ENCODE measurements at regions of chr1 and their contacts with region 1.

Region 1: DNA sequence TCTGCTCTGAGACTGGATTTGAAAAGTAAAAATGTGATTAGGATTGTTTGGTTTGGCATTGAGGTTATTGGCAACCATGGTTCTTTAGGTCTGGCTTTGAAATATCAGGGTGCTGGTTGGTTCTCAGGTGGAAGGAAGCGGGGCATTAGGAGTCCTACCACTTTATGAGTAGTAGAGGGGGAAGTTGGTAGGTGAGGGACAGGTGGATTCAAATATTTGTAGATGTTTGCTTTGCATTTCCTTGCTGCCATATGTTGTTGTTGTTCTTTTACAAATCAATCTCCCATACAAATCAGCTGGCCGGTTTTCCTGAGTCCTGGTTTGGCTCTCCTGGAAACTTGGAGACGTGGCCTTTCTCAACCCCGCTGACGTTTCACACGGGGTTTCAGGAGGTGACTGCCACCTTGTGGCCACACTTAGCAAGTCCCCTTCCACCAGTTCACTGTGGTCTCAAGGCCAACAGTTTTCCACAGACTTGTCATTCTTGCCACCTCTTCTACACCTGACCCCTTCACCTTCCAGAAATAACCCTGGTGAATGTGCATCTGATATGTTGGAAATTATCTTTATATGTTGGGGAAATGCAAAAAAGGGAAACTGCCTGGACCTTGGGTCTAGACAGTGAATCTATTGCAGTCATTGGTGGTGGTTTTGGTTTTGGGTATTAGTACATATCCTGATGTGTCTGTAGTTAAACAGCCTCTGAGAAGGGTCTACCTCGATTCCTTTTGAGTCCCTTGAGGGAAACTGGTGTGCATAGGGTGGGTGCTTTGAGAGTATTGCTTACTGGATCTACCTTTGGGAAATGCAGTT is 127.0 kb upstream of the KIAA0040 start:
- DNase-seq: peak; percentile 45 to 83 (median 71)
- ATAC-seq: peak; percentile 86
- H3K4me3 ChIP-seq: no peak overlapping the region
- H3K4me3 Mint-ChIP-seq: no peak overlapping the region
- H3K27ac ChIP-seq: no peak overlapping the region
- H3K27ac Mint-ChIP-seq: no peak overlapping the region
- H3K4me1 ChIP-seq: peaks cover 6% of the 10 kb centered on the region
- H3K4me1 Mint-ChIP-seq: peaks cover 11% of the 10 kb centered on the region
- H3K27me3 ChIP-seq: no peaks in the 10 kb centered on the region
- H3K27me3 Mint-ChIP-seq: peaks cover 3% of the 10 kb centered on the region
- CTCF ChIP-seq: peak; percentile 86

Region 2: DNA sequence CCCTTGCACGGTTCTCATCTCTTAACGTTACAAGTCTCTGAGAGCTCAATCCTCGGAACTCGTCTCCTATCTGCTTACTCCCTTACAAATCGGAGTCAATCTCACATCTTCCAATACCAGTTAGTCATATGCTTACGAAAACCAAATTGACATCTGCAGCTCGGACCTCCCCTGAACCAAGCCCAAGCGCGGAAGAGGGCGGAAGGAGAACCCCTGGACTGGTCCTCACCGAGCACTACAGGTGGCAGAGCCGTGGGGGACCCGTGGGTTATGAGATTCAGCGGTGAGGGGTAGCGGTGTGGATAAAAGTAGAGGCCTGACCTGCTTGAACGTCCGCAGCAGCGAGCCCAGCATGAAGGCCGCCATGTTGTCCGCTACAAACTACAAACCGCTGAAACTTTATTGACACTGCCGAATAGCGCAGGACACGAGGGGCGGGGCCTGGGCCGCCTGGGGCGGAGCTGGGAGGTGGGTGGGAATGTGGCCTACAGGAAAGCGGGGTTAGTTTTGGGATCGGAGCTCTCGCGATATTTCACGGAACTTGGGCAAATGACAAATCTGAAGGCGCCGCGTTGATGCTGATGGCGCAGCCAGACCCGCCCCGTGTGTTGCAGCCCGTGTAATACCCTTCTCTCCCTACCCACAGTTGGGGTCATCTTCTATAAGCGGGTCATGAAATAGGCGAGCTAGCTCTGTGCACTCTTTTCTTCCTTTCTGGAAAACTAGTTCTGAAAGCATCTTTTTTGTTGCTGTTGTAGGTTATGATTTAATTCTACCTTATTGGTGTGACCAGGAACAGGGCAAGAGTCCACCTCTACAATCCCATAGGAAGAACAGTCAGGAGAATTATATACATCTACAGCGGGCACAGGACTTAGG is 296.3 kb before region 1 on chr1 and contains the start of gene MRPS14:
- CTCF ChIA-PET with region 1: interaction called, 8 read pairs
- POLR2A ChIA-PET with region 1: no interaction called
- intact Hi-C with region 1: loop called in 1 of 2 experiments (anchors 2 kb)
- DNase-seq: peak; percentile 96 to 99 (median 98)
- ATAC-seq: peak; percentile 91
- H3K4me3 ChIP-seq: peak within 1 kb of the TSS; percentile 72 to 96
- H3K4me3 Mint-ChIP-seq: peak within 1 kb of the TSS; percentile 91
- H3K27ac ChIP-seq: peak within 1 kb of the TSS; percentile 83 to 93
- H3K27ac Mint-ChIP-seq: peak within 1 kb of the TSS; percentile 94
- H3K4me1 ChIP-seq: peaks cover 6% of the 10 kb centered on the region
- H3K4me1 Mint-ChIP-seq: peaks cover 32% of the 10 kb centered on the region
- H3K27me3 ChIP-seq: no peaks in the 10 kb centered on the region
- H3K27me3 Mint-ChIP-seq: no peaks in the 10 kb centered on the region
- CTCF ChIP-seq: no peak
- total RNA-seq, gene MRPS14: 6.8 to 7.3 TPM

Region 3: DNA sequence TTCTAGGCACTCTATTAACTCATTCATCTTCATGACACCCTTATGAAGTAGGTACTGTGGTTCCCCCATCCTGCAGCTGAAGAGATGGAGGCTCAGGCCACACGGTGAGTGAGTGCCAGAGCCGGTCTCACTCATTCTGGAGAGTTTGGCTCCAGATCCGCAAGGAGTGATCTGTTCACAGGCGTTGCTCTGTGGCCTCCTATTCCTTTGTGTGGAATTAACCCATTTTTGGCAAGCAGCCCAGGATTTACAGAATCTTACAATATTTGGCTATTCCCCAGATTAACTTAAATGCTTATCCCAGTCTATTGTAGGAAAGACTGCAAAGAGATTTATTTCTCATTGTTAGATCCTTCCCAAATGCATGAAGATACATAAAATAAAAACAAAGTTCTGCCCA is 156.7 kb before region 1 on chr1:
- CTCF ChIA-PET with region 1: interaction called, 350 read pairs
- POLR2A ChIA-PET with region 1: no interaction called
- intact Hi-C with region 1: no loop called
- DNase-seq: no peak
- ATAC-seq: no peak
- H3K4me3 ChIP-seq: no peak overlapping the region
- H3K4me3 Mint-ChIP-seq: no peak overlapping the region
- H3K27ac ChIP-seq: no peak overlapping the region
- H3K27ac Mint-ChIP-seq: peak overlapping the region; percentile 69
- H3K4me1 ChIP-seq: no peaks in the 10 kb centered on the region
- H3K4me1 Mint-ChIP-seq: peaks cover 28% of the 10 kb centered on the region
- H3K27me3 ChIP-seq: no peaks in the 10 kb centered on the region
- H3K27me3 Mint-ChIP-seq: no peaks in the 10 kb centered on the region
- CTCF ChIP-seq: no peak

Region 4: GRCh38 chr1:175192630-175193526 is 126.7 kb before region 1 on chr1 and contains the start of gene KIAA0040:
- CTCF ChIA-PET with region 1: interaction called, 27 read pairs
- POLR2A ChIA-PET with region 1: no interaction called
- intact Hi-C with region 1: no loop called
- DNase-seq: peak in 8 of 9 experiments; percentile 27 to 82 (median 56)
- ATAC-seq: peak; percentile 65
- H3K4me3 ChIP-seq: peak within 1 kb of the TSS; percentile 78 to 96
- H3K4me3 Mint-ChIP-seq: peak within 1 kb of the TSS; percentile 91
- H3K27ac ChIP-seq: peak within 1 kb of the TSS; percentile 64 to 84
- H3K27ac Mint-ChIP-seq: peak within 1 kb of the TSS; percentile 88
- H3K4me1 ChIP-seq: peaks cover 48% of the 10 kb centered on the region
- H3K4me1 Mint-ChIP-seq: peaks cover 60% of the 10 kb centered on the region
- H3K27me3 ChIP-seq: no peaks in the 10 kb centered on the region
- H3K27me3 Mint-ChIP-seq: no peaks in the 10 kb centered on the region
- CTCF ChIP-seq: no peak
- total RNA-seq, gene KIAA0040: 8.7 to 9.6 TPM

Region 5: GRCh38 chr1:175307160-175307559 is 12.5 kb before region 1 on chr1:
- CTCF ChIA-PET with region 1: interaction called, 30 read pairs
- POLR2A ChIA-PET with region 1: no interaction called
- intact Hi-C with region 1: no loop called
- DNase-seq: no peak
- ATAC-seq: no peak
- H3K4me3 ChIP-seq: no peak overlapping the region
- H3K4me3 Mint-ChIP-seq: no peak overlapping the region
- H3K27ac ChIP-seq: no peak overlapping the region
- H3K27ac Mint-ChIP-seq: no peak overlapping the region
- H3K4me1 ChIP-seq: no peaks in the 10 kb centered on the region
- H3K4me1 Mint-ChIP-seq: no peaks in the 10 kb centered on the region
- H3K27me3 ChIP-seq: no peaks in the 10 kb centered on the region
- H3K27me3 Mint-ChIP-seq: peaks cover 4% of the 10 kb centered on the region
- CTCF ChIP-seq: no peak

Region 6: DNA sequence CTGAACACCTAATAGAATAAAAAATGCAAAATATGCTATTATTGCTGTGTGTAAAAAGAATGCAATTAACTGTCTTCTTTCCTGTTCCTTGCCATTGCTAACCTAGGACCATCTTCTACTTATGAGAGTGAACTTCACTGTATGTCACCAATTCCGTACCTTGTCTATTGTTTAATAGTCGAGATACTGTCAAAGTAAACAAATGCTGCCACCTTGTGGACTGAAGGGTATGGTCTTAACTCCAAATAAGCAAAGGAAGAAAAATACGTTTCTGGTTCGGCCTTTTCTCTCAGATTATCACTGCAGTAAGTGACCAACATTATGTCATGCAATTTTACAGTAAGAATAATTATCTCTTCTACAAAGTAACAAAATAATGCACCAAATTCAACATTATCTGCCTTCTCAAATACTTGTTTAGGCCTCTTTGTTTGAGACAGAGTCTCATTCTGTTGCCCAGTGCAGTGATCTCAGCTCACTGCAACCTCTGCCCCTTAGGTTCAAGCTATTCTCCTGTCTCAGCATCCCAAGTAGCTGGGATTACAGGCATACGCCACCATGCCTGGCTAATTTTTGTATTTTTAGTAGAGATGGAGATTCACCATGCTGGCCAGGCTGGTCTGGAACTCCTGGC is 754.0 kb after region 1 on chr1:
- CTCF ChIA-PET with region 1: no interaction called
- POLR2A ChIA-PET with region 1: no interaction called
- intact Hi-C with region 1: loop called in 1 of 2 experiments (anchors 2 kb)
- DNase-seq: peak in 4 of 9 experiments; percentile 14 to 57 (median 34)
- ATAC-seq: peak; percentile 59
- H3K4me3 ChIP-seq: no peak overlapping the region
- H3K4me3 Mint-ChIP-seq: no peak overlapping the region
- H3K27ac ChIP-seq: no peak overlapping the region
- H3K27ac Mint-ChIP-seq: no peak overlapping the region
- H3K4me1 ChIP-seq: no peaks in the 10 kb centered on the region
- H3K4me1 Mint-ChIP-seq: peaks cover 12% of the 10 kb centered on the region
- H3K27me3 ChIP-seq: no peaks in the 10 kb centered on the region
- H3K27me3 Mint-ChIP-seq: no peaks in the 10 kb centered on the region
- CTCF ChIP-seq: peak; percentile 66

Measured in CD8-positive, alpha-beta T cell (primary cell).